Endothelial cell of umbilical vein (primary cell): ENCODE measurements at regions of chr2 and their contacts with region 1.

Region 1: DNA sequence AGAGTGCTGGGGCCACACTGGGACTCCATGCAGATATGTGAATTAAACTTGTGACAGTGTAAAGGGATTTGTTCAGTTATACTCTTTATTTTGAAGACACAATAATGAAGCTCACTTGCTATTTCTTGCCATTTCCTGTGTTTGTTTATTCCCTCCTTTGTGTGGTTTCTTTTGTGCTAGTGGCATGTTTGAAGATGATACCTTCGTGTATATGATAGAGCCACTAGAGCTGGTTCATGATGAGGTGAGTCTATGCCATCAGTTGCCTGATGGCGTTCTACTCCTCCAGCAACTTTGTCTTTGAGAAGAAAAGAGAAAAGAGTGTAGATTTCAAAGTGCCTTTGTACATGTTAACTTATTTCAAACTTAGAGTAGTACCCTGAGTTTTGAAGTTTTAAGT is 99.2 kb upstream of the FAM237A start:
- DNase-seq: no peak
- H3K4me3 ChIP-seq: no peak overlapping the region
- H3K27ac ChIP-seq: no peak overlapping the region
- H3K4me1 ChIP-seq: no peaks in the 10 kb centered on the region
- H3K27me3 ChIP-seq: no peaks in the 10 kb centered on the region
- CTCF ChIP-seq: no peak
- POLR2A ChIP-seq: no peak

Region 2: GRCh38 chr2:206249714-206250591 is 293.1 kb before region 1 on chr2:
- CTCF ChIA-PET with region 1: no interaction called
- POLR2A ChIA-PET with region 1: no interaction called
- dilution Hi-C with region 1: no loop called
- intact Hi-C with region 1: no loop called
- DNase-seq: peak; percentile 33
- H3K4me3 ChIP-seq: peak overlapping the region; percentile 0 to 60 (median 23)
- H3K27ac ChIP-seq: no peak overlapping the region
- H3K4me1 ChIP-seq: no peaks in the 10 kb centered on the region
- H3K27me3 ChIP-seq: peaks cover 25 to 41% of the 10 kb centered on the region in 2 experiments
- CTCF ChIP-seq: peak; percentile 5 to 24
- POLR2A ChIP-seq: no peak

Region 3: DNA sequence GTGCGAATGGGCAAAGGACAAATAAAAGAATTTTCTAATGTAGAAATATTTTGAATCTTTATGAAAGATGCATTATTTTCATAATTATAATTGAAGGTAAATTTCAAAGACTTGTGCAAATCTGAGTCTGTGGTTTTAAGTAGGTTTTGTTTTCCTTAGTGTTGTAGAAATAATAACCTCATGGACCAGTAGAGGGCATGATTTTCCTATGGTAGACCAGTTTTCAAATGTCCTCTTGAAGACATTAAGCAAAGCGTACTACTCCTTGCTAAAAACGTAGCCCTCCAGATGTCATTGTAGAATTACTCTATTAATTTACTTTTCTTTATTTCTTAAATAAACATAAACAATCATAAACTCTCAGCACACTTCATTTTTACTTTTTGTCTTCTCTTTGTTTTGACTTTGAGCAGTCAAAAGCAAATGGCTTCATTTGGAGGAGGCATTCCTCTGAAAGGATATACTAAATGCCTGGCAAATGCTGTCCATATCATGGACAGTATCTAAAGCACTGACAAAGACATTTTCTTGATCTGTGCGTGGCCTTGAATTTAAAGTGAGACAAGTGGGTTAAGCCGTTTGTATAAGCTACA is 13.4 kb after region 1 on chr2:
- CTCF ChIA-PET with region 1: interaction called, 13 read pairs
- POLR2A ChIA-PET with region 1: no interaction called
- dilution Hi-C with region 1: no loop called
- intact Hi-C with region 1: no loop called
- DNase-seq: peak; percentile 72
- H3K4me3 ChIP-seq: no peak overlapping the region
- H3K27ac ChIP-seq: no peak overlapping the region
- H3K4me1 ChIP-seq: no peaks in the 10 kb centered on the region
- H3K27me3 ChIP-seq: no peaks in the 10 kb centered on the region
- CTCF ChIP-seq: peak; percentile 30 to 39
- POLR2A ChIP-seq: no peak

Region 4: DNA sequence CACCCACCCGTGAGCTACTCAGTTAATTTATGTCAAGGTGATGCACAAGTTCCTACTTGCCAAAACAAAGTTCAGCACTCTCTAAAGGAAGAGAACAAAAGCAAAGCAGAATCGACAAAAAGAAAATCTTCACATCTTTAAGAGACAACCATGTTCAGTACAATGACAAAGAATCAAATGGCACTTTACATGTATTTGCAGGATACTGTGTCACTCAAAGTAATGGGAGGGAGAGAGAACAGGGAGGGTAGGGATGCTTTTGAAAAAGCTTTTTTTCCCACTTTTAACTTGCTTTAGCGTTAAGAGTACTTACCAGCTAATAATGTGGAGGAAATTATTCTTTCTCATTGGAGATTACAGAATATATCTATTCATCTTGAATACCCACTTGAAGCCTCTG is 60.2 kb after region 1 on chr2:
- CTCF ChIA-PET with region 1: no interaction called
- POLR2A ChIA-PET with region 1: no interaction called
- dilution Hi-C with region 1: no loop called
- intact Hi-C with region 1: no loop called
- DNase-seq: no peak
- H3K4me3 ChIP-seq: no peak overlapping the region
- H3K27ac ChIP-seq: no peak overlapping the region
- H3K4me1 ChIP-seq: no peaks in the 10 kb centered on the region
- H3K27me3 ChIP-seq: no peaks in the 10 kb centered on the region
- CTCF ChIP-seq: no peak
- POLR2A ChIP-seq: no peak